Activated CD8-positive, alpha-beta T cell treated with anti-CD3 and anti-CD28 coated beads, Interleukin-2, amount 10 ng/mL, durations not matched to agents 7 days and 5 days (primary cell): ENCODE measurements at regions of chr3 and their contacts with region 1.

Region 1: GRCh38 chr3:185942907-185943759 is 5.3 kb upstream of the TRA2B start:
- DNase-seq: peak; percentile 91
- ATAC-seq: peak; percentile 95
- H3K4me3 Mint-ChIP-seq: peak overlapping the region; percentile 26
- H3K27ac Mint-ChIP-seq: peak overlapping the region; percentile 47
- H3K4me1 Mint-ChIP-seq: peaks cover 21% of the 10 kb centered on the region
- H3K27me3 Mint-ChIP-seq: peaks cover 14% of the 10 kb centered on the region

Region 2: GRCh38 chr3:185659942-185660921 is 282.9 kb before region 1 on chr3:
- CTCF ChIA-PET with region 1: interaction called, 14 read pairs
- POLR2A ChIA-PET with region 1: no interaction called
- DNase-seq: peak; percentile 78
- ATAC-seq: peak; percentile 89
- H3K4me3 Mint-ChIP-seq: no peak overlapping the region
- H3K27ac Mint-ChIP-seq: no peak overlapping the region
- H3K4me1 Mint-ChIP-seq: peaks cover 4% of the 10 kb centered on the region
- H3K27me3 Mint-ChIP-seq: peaks cover 17% of the 10 kb centered on the region

Region 3: GRCh38 chr3:185929192-185930151 is 13.7 kb before region 1 on chr3:
- CTCF ChIA-PET with region 1: interaction called, 98 read pairs
- POLR2A ChIA-PET with region 1: interaction called, 107 read pairs
- DNase-seq: no peak
- ATAC-seq: no peak
- H3K4me3 Mint-ChIP-seq: peak overlapping the region; percentile 100
- H3K27ac Mint-ChIP-seq: peak overlapping the region; percentile 26
- H3K4me1 Mint-ChIP-seq: peaks cover 92% of the 10 kb centered on the region
- H3K27me3 Mint-ChIP-seq: no peaks in the 10 kb centered on the region

Region 4: DNA sequence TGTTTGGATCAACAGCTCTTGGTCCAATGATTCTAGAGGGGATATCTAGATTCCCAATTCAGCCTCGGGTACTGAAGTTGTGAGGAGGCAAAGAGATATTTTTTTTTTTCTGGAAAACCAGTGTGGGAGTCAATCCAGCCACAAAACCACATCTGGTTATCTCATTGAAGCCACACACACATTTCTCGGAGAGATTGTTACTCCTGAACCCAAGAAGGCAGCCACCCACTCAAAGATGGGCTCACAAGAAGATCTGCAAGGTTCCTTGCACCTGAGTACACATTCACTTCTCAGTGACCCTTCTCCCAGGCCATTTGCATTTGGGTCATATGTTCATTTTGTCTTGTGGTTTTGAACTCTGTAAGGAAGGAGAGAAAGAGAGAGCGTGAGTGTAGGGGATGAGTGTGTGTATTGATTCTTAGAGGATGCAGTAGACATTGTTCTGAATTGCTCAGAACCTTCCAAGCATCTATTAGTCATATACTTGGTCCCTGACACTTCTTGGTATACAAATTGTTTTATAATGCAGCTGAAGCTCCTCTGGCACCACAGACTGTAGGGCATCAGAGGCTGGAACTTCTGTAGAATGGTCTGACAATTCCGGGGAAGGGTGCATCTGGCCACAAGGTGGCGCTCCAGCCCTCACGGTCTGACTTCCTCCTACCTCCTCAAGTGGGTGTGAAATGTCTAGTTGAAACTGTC is 34.0 kb after region 1 on chr3:
- CTCF ChIA-PET with region 1: interaction called, 58 read pairs
- POLR2A ChIA-PET with region 1: interaction called, 3 read pairs
- DNase-seq: peak; percentile 88
- ATAC-seq: peak; percentile 96
- H3K4me3 Mint-ChIP-seq: no peak overlapping the region
- H3K27ac Mint-ChIP-seq: no peak overlapping the region
- H3K4me1 Mint-ChIP-seq: peaks cover 12% of the 10 kb centered on the region
- H3K27me3 Mint-ChIP-seq: peaks cover 25% of the 10 kb centered on the region

Region 5: GRCh38 chr3:186121968-186122367 is 178.8 kb after region 1 on chr3:
- CTCF ChIA-PET with region 1: no interaction called
- POLR2A ChIA-PET with region 1: no interaction called
- DNase-seq: no peak
- ATAC-seq: no peak
- H3K4me3 Mint-ChIP-seq: no peak overlapping the region
- H3K27ac Mint-ChIP-seq: no peak overlapping the region
- H3K4me1 Mint-ChIP-seq: no peaks in the 10 kb centered on the region
- H3K27me3 Mint-ChIP-seq: peaks cover 42% of the 10 kb centered on the region

Region 6: GRCh38 chr3:186162221-186162620 is 219.1 kb after region 1 on chr3:
- CTCF ChIA-PET with region 1: no interaction called
- POLR2A ChIA-PET with region 1: no interaction called
- DNase-seq: no peak
- ATAC-seq: no peak
- H3K4me3 Mint-ChIP-seq: no peak overlapping the region
- H3K27ac Mint-ChIP-seq: no peak overlapping the region
- H3K4me1 Mint-ChIP-seq: no peaks in the 10 kb centered on the region
- H3K27me3 Mint-ChIP-seq: peaks cover 25% of the 10 kb centered on the region

Region 7: DNA sequence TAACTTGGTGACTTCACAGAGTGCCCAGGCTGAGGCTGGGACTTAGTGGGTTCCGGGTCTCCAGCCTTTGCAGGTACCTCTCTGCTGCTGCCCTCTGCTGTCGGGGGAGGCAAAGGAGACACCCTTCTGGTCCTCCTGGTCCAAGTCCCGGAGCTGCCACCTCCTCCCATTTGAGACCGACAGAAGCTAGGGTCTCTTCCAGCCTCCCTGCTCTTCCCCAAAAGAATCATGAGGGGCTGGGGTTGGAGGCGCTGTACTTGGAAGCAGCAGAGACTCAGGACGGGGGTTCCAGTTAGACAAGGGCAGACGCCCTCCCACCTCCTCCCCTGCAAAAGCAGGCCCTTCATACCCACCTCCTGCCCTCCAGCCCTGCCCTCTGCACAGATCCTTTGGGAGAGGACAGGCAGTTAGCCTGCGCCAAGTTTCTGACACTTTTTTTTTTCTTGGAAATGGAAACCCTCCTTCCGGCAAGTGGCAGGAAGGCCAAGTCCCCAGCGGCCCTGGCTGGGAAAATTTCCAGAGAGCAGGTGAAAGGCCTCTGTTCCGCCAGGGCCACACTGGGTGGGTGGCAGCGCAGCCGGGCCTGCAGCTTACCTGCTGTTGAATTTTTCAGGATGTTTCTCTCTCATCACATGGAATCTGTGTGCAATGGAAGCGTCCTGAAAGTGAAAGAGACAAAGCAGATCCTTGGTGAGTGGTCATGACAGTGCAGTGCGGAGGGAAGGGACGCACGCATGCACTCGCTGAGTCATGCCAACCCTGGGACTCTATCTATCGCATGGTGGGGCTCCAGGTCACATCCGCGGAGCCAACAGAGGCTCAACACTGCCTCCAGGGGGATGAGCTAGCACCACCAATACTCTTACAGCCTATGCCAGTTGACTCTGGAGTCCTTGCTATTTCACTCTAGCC is 299.0 kb after region 1 on chr3:
- CTCF ChIA-PET with region 1: interaction called, 16 read pairs
- POLR2A ChIA-PET with region 1: no interaction called
- DNase-seq: peak; percentile 80
- ATAC-seq: peak; percentile 97
- H3K4me3 Mint-ChIP-seq: no peak overlapping the region
- H3K27ac Mint-ChIP-seq: no peak overlapping the region
- H3K4me1 Mint-ChIP-seq: peaks cover 18% of the 10 kb centered on the region
- H3K27me3 Mint-ChIP-seq: peaks cover 11% of the 10 kb centered on the region

Region 8: DNA sequence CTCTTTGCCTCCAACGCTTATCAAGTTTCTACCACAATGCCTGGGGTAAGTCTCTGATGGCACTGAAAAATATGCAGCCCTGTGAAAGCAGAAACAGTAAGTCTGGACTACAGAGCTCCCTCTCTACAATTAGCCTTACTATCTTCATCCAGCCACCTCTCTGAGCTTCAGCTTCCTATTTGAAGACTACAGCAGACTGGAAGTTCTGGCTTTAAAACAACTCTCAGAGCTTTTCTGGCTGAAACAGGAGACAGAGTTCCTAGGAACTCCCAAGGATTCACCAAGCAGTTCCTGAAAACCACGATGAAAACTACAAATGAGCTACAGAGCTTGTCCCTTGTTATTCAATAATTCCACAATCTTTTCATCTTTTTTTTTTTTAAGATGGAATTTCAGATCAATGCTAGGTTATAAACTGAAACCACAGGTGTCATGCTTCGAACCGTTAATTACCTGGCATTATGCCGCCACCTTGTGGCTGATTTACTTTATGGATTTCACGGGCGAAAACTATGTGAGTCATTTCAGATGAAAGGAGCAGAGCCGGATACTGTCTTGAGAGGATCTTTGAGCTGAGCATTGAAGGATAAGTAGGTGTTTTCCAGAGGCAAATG is 597.2 kb after region 1 on chr3:
- CTCF ChIA-PET with region 1: interaction called, 64 read pairs
- POLR2A ChIA-PET with region 1: interaction called, 3 read pairs
- DNase-seq: peak; percentile 88
- ATAC-seq: peak; percentile 91
- H3K4me3 Mint-ChIP-seq: no peak overlapping the region
- H3K27ac Mint-ChIP-seq: no peak overlapping the region
- H3K4me1 Mint-ChIP-seq: peaks cover 11% of the 10 kb centered on the region
- H3K27me3 Mint-ChIP-seq: no peaks in the 10 kb centered on the region